A673 (cell line): ENCODE measurements at regions of chr1 and their contacts with region 1.

Region 1: GRCh38 chr1:246811985-246812384 is 87.8 kb downstream of the SCCPDH start:
- DNase-seq: no peak
- H3K4me3 ChIP-seq: no peak overlapping the region
- H3K27ac ChIP-seq: no peak overlapping the region
- H3K4me1 ChIP-seq: no peaks in the 10 kb centered on the region
- H3K27me3 ChIP-seq: no peaks in the 10 kb centered on the region
- CTCF ChIP-seq: no peak

Region 2: GRCh38 chr1:246789454-246790339 is 22.3 kb before region 1 on chr1:
- CTCF ChIA-PET with region 1: no interaction called
- POLR2A ChIA-PET with region 1: interaction called, 10 read pairs
- intact Hi-C with region 1: no loop called
- DNase-seq: no peak
- H3K4me3 ChIP-seq: no peak overlapping the region
- H3K27ac ChIP-seq: no peak overlapping the region
- H3K4me1 ChIP-seq: no peaks in the 10 kb centered on the region
- H3K27me3 ChIP-seq: no peaks in the 10 kb centered on the region
- CTCF ChIP-seq: no peak

Region 3: GRCh38 chr1:246893191-246893939 is 81.4 kb after region 1 on chr1:
- CTCF ChIA-PET with region 1: no interaction called
- POLR2A ChIA-PET with region 1: no interaction called
- intact Hi-C with region 1: no loop called
- DNase-seq: no peak
- H3K4me3 ChIP-seq: no peak overlapping the region
- H3K27ac ChIP-seq: no peak overlapping the region
- H3K4me1 ChIP-seq: no peaks in the 10 kb centered on the region
- H3K27me3 ChIP-seq: no peaks in the 10 kb centered on the region
- CTCF ChIP-seq: no peak